Sciatic nerve (tissue), 2 donors: ENCODE measurements at regions of chr5 and their contacts with region 1.

Region 1: GRCh38 chr5:80255732-80256479 is at the start of gene SERINC5:
- DNase-seq: peak; percentile 93
- ATAC-seq: peak; percentile 92
- total RNA-seq, gene SERINC5: 70.2 TPM

Region 2: DNA sequence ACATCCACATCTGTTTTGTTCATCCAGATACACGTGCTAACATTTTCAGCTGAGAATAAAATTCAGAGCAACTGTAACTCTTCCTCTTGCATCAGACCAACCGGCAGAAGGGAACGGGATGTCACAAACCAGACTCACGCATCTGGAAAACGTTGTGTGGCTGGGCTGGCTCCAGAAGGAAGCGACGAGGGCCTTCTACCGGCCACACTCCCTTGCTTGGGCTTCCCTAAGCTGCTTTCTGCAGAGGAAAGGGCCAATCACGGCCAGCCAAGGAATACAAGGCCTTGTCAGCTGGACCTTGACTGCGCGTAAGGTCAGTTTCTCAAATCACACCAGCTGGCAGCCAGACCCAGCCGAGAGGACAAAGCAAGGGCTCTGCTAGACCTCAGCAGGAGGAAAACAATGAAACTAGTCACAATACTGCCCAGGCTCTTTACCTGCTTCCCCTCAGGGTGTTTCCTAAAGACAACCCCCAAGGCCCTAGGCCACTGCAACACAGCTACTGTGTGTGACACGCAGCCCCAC is 114.7 kb before region 1 on chr5:
- intact Hi-C with region 1: loop called (anchors 10 kb)
- DNase-seq: peak; percentile 89
- ATAC-seq: peak; percentile 98

Region 3: DNA sequence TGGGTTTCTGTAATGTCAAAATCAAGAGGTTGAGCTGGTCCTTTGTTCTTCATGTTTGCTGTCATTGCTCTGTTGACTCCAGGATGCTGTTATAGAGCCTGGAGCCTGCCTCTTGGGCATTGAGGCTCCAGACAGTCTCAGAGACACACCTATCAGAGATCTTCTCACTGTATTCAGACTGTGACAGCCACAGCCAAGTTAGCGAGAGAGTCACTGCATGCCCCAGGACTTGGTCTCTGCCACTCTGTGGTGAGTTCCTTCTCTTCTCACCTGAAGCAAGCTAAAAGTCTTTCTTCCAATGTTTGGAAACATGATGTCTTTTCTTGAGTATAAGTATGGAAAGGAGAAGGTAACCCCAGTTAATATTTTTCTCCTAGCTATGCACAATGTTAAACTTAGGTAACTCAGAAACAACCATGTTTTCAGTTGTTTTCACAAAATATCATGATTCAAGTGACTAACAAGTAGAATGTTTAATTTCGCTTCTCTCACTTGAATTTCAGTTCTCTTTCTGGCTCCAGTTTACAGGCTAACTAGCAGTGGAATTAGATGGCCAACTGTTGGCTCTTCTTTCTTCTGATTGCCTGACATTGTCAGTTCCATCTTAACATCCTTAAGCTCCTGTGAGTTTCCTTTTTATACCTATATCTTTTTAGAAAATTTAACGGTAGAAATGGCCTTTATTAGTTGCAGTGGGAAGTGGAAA is 131.3 kb after region 1 on chr5:
- intact Hi-C with region 1: no loop called
- DNase-seq: no peak
- ATAC-seq: no peak